PC-3 (cell line): ENCODE measurements at regions of chr15 and their contacts with region 1.

Region 1: DNA sequence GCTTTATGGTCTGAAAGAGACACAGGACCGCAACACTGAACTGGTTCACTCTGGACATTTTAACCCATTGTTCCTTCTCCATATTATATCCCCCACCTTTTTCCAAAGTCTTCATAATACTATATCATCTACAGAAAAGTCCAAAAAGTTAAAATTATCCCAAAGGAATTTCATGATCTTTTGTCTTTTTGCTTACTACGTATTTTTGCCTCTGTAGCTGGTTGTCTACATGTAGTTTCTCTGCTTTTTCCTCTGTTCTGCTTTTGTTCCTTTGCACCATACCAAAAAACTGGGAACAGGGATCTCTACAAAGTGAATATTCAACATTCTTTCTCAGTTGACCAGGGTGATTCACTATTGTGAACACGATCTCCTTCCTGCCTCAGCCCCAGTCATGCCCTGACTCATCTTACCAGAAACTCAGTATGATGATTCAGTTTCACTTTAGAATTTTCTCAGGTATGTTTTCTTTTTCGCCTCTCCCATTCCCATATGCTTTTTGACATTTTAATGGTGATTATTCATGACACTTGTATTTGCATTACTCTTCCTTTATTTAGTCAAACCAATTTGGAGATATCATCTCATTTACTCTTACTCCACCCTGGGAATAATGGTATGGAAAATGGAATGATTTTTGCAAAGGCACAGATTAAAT is 14.5 kb downstream of the EMC4 start:
- DNase-seq: peak; percentile 99
- ATAC-seq: peak; percentile 97
- H3K4me3 ChIP-seq: 0 out of 2 replicates have a peak overlapping the region, but pooled peaks have one; percentile 20
- H3K27ac ChIP-seq: peak overlapping the region; percentile 98
- H3K4me1 ChIP-seq: peaks cover 38% of the 10 kb centered on the region
- H3K27me3 ChIP-seq: no peaks in the 10 kb centered on the region
- CTCF ChIP-seq: no peak

Region 2: GRCh38 chr15:33559207-33559890 is 679.9 kb before region 1 on chr15:
- CTCF ChIA-PET with region 1: no interaction called
- POLR2A ChIA-PET with region 1: no interaction called
- intact Hi-C with region 1: no loop called
- DNase-seq: no peak
- ATAC-seq: no peak
- H3K4me3 ChIP-seq: no peak overlapping the region
- H3K27ac ChIP-seq: no peak overlapping the region
- H3K4me1 ChIP-seq: no peaks in the 10 kb centered on the region
- H3K27me3 ChIP-seq: peaks cover 81% of the 10 kb centered on the region
- CTCF ChIP-seq: no peak

Region 3: DNA sequence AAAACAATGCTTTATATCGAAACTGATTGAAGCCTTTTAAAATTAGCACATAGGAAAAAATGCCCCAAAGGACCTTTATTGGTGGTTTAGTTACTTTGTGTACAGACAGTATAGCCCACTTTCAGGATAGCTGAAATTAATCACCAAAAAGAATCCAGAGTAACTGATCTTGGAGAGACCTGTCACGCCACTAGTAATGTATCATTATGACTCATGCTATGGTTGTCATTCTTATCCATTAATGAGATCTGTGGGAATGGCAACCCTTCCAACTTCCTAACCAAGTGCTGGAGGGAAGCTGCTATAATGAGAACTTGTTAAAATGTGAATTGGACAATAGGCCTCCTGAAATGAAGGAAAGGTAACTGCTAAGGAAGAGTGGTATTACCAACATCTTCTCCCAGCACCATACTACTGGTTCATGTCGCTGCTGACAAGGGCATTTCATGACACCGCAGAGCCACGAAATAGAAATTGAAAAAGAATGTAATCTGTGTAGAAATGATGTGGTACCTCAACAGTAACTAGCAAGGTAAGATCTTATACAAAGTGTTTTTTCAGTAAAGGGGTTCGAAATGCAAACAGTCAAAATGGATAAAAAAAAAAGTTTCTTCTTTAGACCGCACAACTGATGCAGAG is 21.6 kb before region 1 on chr15:
- CTCF ChIA-PET with region 1: no interaction called
- POLR2A ChIA-PET with region 1: interaction called, 4 read pairs
- intact Hi-C with region 1: loop called (anchors 1 kb)
- DNase-seq: peak; percentile 95
- ATAC-seq: peak; percentile 76
- H3K4me3 ChIP-seq: peak overlapping the region; percentile 38
- H3K27ac ChIP-seq: peak overlapping the region; percentile 99
- H3K4me1 ChIP-seq: peaks cover 28% of the 10 kb centered on the region
- H3K27me3 ChIP-seq: no peaks in the 10 kb centered on the region
- CTCF ChIP-seq: no peak

Region 4: DNA sequence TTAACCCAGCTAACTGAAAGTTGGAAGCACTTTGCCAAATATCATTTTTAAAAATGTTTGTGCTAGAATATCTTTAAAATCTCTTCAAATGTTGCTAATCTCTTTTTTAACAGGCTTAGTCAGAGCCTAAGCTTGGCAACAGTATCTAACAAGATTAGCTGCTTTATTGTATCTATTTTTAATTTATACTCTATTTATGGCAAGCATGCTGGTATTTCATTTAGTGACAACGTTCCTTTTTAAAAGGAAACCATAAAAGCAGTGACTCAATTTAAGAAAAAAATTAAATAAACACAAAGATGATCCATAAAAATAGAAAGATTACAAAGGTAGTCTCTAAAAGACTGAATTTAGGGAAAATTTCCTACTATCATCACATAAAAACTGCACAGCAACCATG is 57.8 kb after region 1 on chr15:
- CTCF ChIA-PET with region 1: no interaction called
- POLR2A ChIA-PET with region 1: no interaction called
- intact Hi-C with region 1: loop called (anchors 1 kb)
- DNase-seq: peak; percentile 62
- ATAC-seq: peak; percentile 88
- H3K4me3 ChIP-seq: no peak overlapping the region
- H3K27ac ChIP-seq: peak overlapping the region; percentile 81
- H3K4me1 ChIP-seq: peaks cover 30% of the 10 kb centered on the region
- H3K27me3 ChIP-seq: no peaks in the 10 kb centered on the region
- CTCF ChIP-seq: no peak

Region 5: DNA sequence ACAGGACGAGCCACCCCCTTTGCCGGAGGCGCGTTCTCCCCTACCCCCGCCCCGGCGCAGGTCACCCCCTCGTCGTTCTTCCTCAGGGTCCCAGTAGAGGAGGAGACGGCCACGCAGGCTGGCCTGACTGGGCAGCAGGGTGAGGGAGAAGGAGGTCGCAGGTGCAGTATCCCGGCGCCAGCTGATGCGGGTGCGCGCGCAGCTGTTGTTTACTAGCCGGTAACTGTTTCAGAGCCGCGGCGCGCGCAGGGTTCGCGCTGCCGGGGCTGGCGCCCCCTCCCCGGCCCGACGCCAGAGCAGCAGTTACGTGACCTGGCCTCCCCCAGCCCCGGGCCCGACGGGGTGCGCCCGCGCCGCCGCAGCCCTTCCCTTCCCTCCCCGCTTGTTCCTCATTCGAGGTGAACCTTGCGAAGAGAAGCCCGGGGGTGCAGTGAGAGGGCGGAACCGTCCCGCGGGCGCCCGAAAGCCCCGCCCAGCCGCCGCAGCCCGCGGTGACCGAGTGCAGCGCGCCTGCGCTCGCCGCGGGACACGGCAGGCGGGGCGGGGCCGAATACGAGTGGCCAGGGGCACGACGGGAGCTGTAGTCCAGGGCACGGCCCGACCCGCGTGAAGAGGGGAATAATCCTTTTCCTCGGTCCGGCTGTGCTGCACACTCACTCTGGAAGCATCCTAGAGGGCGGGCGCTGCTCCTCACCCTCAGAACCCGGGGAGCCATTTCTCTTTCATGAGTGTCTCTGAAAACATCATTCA is 98.5 kb after region 1 on chr15 and contains the start of gene SLC12A6:
- CTCF ChIA-PET with region 1: no interaction called
- POLR2A ChIA-PET with region 1: interaction called, 4 read pairs
- intact Hi-C with region 1: loop called (anchors 1 kb)
- DNase-seq: peak; percentile 95
- ATAC-seq: peak; percentile 82
- H3K4me3 ChIP-seq: peak within 1 kb of the TSS; percentile 90
- H3K27ac ChIP-seq: peak within 1 kb of the TSS; percentile 93
- H3K4me1 ChIP-seq: peaks cover 68% of the 10 kb centered on the region
- H3K27me3 ChIP-seq: no peaks in the 10 kb centered on the region
- CTCF ChIP-seq: no peak
- total RNA-seq, gene SLC12A6: 22.9 TPM in 2 replicates